ENCODE measurements at regions of chr18 and their contacts with region 1.

Region 1: DNA sequence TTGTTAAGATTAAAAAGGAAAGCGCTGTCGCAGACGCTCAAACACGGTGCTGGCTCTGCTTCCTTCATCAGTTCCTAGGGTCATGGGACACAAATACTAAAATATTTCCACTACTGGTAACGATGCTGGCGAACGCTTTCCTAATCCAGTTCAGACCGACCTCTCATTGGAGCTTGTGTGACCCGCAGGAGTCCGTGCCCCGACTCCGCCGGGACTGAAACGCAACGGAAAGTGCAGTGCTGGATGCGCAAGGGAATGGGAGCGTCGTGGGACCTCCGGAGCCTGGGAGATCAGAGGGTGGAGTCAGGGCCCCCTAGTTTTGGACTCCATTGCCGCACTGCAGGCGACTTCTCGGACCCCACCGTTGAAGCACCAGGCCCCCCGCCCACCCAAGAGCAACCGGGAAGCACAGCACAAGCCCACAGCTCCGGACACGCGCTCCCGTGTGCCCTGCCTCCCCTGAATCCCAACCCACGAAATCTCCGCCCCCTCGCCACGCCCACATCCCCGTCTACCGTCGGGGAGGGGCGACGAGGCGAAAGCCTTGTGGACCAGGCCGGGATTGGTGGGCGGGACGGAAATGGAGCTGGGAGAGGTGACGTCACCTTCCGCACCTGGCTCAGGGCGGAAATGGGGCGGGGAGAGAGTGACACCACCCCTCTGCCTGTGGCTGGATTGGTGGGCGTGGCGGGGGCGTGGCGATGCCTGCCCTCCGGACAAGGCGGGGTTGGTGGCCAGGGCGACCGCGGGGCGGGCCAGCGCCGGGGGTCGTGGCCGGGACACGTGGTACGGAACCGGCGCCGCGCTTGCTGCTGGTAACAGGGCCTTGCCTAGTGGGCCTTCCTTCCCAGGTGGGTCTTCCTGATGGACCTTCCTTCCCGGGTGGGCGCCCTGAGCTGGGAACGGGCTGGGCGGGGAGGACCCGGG is at the start of gene CNDP2:
- DNase-seq: peak; percentile 99 to 100 (median 99)
- H3K4me3 ChIP-seq: peak within 1 kb of the TSS; percentile 68 to 98 (median 92)
- H3K27ac ChIP-seq: peak within 1 kb of the TSS; percentile 24 to 98 (median 92)
- H3K27me3 ChIP-seq: no peaks in the 10 kb centered on the region
- CTCF ChIP-seq: peak in 9 of 56 donors; percentile 3 to 38 (median 10)
- total RNA-seq, gene CNDP2: 146 to 408 (median 218) TPM

Region 2: GRCh38 chr18:74196220-74197119 is 299.4 kb before region 1 on chr18:
- intact Hi-C with region 1: loop called in 1 of 2 experiments (anchors 5 kb)
- DNase-seq: peak in 3 of 10 donors; percentile 50 to 54 (median 50)
- H3K4me3 ChIP-seq: peak overlapping the region in 41 of 59 donors; percentile 1 to 58 (median 35)
- H3K27ac ChIP-seq: peak overlapping the region in 1 of 59 donors; percentile 29
- H3K27me3 ChIP-seq: no peaks in the 10 kb centered on the region
- CTCF ChIP-seq: peak; percentile 82 to 99 (median 93)

Region 3: DNA sequence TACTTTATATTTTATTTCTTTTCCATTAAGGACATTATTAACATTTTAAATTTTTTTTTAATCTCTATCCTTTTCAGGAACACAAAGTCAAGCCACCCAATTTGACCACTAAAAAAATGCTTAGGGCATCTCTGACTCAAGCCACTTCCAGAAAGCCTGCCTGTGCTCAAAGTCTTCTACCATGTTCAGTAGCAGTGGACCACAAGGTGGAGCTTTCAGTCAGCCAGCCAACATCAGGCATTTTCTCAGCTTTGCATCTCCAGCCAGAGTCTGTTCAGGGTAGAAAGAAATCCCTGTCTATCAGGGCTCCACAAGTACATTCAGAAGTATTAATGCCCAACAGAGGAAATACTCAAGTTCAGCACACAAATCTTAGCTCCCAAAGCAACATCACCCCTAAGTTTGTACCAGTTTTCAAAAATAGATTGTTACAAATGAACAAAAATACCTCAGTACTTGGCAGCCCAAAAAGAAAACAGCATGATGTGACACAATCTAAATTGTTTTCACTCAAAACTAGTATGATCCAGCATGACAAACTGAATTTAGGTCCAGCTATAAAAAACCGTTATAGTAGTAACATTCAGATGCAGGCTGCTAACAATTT is 142.6 kb before region 1 on chr18:
- intact Hi-C with region 1: loop called in 1 of 2 experiments (anchors 1 kb)
- DNase-seq: peak; percentile 43 to 90 (median 79)
- H3K4me3 ChIP-seq: no peak overlapping the region
- H3K27ac ChIP-seq: peak overlapping the region in 1 of 59 donors; percentile 18
- H3K27me3 ChIP-seq: no peaks in the 10 kb centered on the region
- CTCF ChIP-seq: peak; percentile 62 to 98 (median 89)

Region 4: DNA sequence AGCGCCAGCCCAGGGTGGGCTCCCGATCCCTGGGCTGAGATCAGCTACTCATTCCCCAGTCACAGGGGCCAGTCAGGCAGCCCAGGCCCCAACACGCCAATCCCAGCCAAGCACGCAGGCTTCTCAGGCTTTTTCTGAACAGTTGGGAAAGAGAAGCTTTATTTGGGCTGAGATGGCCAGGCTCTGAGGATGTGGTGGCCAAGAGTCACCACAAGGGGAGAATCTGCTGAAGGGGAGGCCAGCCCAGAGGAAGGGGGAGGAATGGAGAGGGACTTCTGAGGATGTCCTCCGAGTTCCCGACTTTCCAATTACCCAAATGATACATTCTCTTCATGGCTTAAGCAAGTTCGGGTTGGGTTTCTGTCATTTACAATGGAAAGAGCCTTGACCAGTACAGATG is 36.0 kb before region 1 on chr18:
- intact Hi-C with region 1: loop called in 1 of 2 experiments (anchors 5 kb)
- DNase-seq: peak in 2 of 10 donors; percentile 10 to 30
- H3K4me3 ChIP-seq: peak overlapping the region in 12 of 59 donors; percentile 1 to 27 (median 12)
- H3K27ac ChIP-seq: peak overlapping the region; percentile 13 to 98 (median 93)
- H3K27me3 ChIP-seq: peaks cover 0 to 13% (median 0%) of the 10 kb centered on the region in 45 donors
- CTCF ChIP-seq: peak in 40 of 56 donors; percentile 10 to 58 (median 41)

Region 5: DNA sequence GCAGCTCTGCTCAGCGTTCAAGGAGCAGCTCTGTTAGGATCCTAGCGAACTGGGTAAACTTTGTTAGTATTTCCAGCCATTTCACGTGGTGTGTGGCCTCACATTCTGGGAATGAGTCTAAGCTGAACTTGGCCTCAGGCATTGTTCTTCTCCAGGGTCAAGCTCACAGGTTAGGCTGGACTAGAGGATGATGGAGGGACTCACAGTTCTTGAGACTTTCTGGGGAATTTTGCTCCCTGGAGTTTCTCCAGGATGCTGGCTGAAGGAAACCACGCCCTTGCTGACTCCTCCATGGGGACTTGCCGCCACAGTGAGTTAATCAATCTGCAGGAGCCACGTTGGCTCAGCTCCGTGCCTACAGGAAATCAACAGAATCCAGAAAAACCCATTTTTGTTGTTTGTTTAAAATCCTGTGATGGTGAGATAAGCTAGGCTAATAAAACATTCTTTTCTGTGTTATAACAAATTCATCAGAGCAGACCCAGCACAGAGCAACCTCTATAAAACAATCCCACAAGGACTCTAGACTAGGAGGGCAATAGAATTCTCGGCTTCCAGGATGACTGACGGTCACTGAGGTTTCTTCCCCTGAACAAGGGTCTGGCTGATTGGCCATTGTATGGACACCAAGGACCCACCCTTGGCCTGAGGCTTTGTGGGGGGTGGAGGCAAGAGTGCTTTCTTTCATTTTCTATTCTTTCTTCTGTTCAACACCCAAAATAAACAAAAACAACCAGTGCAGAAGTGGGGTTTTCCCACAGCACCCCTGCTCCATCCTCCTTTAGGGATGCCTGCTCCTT is 51.1 kb after region 1 on chr18:
- intact Hi-C with region 1: loop called (anchors 2 to 5 kb)
- DNase-seq: no peak
- H3K4me3 ChIP-seq: no peak overlapping the region
- H3K27ac ChIP-seq: peak overlapping the region in 54 of 59 donors; percentile 26 to 96 (median 73)
- H3K27me3 ChIP-seq: no peaks in the 10 kb centered on the region
- CTCF ChIP-seq: no peak

Region 6: GRCh38 chr18:74609535-74609934 is 113.7 kb after region 1 on chr18:
- intact Hi-C with region 1: no loop called
- DNase-seq: no peak
- H3K4me3 ChIP-seq: no peak overlapping the region
- H3K27ac ChIP-seq: no peak overlapping the region
- H3K27me3 ChIP-seq: no peaks in the 10 kb centered on the region
- CTCF ChIP-seq: no peak